ENCODE measurements at regions of chr12 and their contacts with region 1.

Region 1: DNA sequence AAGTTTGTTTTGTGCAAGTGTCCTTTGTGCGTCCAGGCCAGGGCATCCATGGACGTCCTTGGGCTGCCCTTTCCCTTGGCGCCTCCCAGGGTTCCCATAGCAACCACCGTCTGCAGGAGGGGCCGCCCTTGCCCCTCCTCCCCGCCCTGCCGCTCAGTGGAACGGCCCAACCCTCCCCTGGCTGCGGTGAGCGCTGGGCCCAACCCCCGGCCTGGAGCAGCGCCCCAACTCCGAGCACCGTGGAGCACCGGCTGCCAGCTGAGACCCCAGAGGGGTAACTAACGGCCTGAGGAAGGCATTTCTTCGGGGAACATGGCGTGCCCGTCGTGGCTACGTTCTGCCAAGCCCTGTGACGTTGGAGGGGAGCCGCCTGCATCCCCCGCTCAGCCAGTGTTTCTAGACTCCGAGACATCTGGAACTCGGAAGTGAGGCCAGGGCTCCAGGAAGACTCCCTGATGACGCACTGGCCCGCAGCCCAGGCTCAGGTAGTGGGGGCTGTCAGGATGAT is 5.3 kb upstream of the ACACB start:
- DNase-seq: peak; percentile 56 to 95 (median 84)
- H3K4me3 ChIP-seq: peak overlapping the region; percentile 14 to 77 (median 60)
- H3K27ac ChIP-seq: peak overlapping the region; percentile 72 to 98 (median 92)
- H3K27me3 ChIP-seq: no peaks in the 10 kb centered on the region
- CTCF ChIP-seq: peak in 7 of 56 donors; percentile 4 to 22 (median 10)

Region 2: GRCh38 chr12:109004017-109004416 is 107.0 kb before region 1 on chr12:
- intact Hi-C with region 1: no loop called
- DNase-seq: no peak
- H3K4me3 ChIP-seq: no peak overlapping the region
- H3K27ac ChIP-seq: peak overlapping the region in 19 of 59 donors; percentile 10 to 78 (median 59)
- H3K27me3 ChIP-seq: no peaks in the 10 kb centered on the region
- CTCF ChIP-seq: no peak

Region 3: GRCh38 chr12:109154451-109155438 is 43.7 kb after region 1 on chr12:
- intact Hi-C with region 1: loop called in 1 of 2 experiments (anchors 5 kb)
- DNase-seq: peak; percentile 54 to 87 (median 74)
- H3K4me3 ChIP-seq: peak overlapping the region; percentile 58 to 93 (median 80)
- H3K27ac ChIP-seq: peak overlapping the region in 57 of 59 donors; percentile 13 to 94 (median 79)
- H3K27me3 ChIP-seq: no peaks in the 10 kb centered on the region
- CTCF ChIP-seq: peak in 40 of 56 donors; percentile 5 to 64 (median 30)

Region 4: GRCh38 chr12:109232731-109233130 is 121.7 kb after region 1 on chr12:
- intact Hi-C with region 1: loop called in 1 of 2 experiments (anchors 5 kb)
- DNase-seq: peak in 5 of 10 donors; percentile 29 to 63 (median 46)
- H3K4me3 ChIP-seq: no peak overlapping the region
- H3K27ac ChIP-seq: peak overlapping the region in 58 of 59 donors; percentile 22 to 98 (median 88)
- H3K27me3 ChIP-seq: no peaks in the 10 kb centered on the region
- CTCF ChIP-seq: no peak

Region 5: DNA sequence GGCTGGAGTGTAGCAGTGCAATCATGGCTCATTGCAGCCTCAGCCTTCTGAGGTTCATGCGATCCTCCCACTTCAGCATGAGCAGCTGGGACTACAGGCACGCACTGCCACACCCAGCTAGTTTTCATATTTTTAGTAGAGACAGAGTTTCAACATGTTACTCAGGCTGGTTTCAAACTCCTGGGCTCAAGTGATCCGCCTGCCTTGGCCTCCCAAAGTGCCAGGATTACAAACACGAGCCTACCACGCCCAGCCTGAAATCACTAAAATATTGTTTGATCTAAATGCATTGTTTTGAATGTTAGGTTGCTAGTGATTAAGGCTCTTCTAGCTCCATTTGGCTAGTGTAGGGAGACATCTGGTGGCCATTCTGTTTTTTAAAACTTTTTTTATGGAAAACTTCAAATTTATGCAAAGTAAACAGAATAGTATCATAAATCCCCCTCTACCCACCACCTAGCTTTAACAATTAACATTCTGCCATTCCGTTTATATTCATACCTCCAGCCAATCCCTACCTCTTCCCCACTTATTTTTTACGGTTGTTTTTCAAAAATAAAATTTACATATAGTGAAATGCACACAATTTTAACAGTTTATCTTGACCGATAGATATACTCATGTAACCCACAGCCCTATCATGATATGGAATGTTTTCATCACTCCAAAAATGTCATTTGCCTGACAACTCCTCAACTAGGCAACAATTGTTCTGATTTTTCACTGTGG is 274.5 kb after region 1 on chr12:
- intact Hi-C with region 1: loop called (anchors 5 kb)
- DNase-seq: peak in 2 of 10 donors; percentile 9 to 46
- H3K4me3 ChIP-seq: peak overlapping the region in 9 of 59 donors; percentile 3 to 32 (median 14)
- H3K27ac ChIP-seq: peak overlapping the region in 1 of 59 donors; percentile 44
- H3K27me3 ChIP-seq: peaks cover 0 to 7% (median 0%) of the 10 kb centered on the region in 45 donors
- CTCF ChIP-seq: peak; percentile 55 to 91 (median 73)

Region 6: GRCh38 chr12:109625131-109625559 is 514.1 kb after region 1 on chr12:
- intact Hi-C with region 1: no loop called
- DNase-seq: peak; percentile 70 to 97 (median 91)
- H3K4me3 ChIP-seq: peak overlapping the region in 3 of 59 donors; percentile 7 to 26 (median 14)
- H3K27ac ChIP-seq: peak overlapping the region in 58 of 59 donors; percentile 81 to 99 (median 95)
- H3K27me3 ChIP-seq: peaks cover 0 to 4% (median 0%) of the 10 kb centered on the region in 45 donors
- CTCF ChIP-seq: peak in 30 of 56 donors; percentile 10 to 50 (median 32)